Caco-2 (cell line): ENCODE measurements at regions of chr16 and their contacts with region 1.

Region 1: GRCh38 chr16:28943281-28943680 is 7.5 kb upstream of the NFATC2IP start:
- DNase-seq: no peak
- H3K4me3 ChIP-seq: no peak overlapping the region
- H3K4me3 Mint-ChIP-seq: no peak overlapping the region
- H3K27ac Mint-ChIP-seq: no peak overlapping the region
- H3K4me1 ChIP-seq: no peaks in the 10 kb centered on the region
- H3K4me1 Mint-ChIP-seq: peaks cover 6% of the 10 kb centered on the region
- H3K27me3 ChIP-seq: no peaks in the 10 kb centered on the region
- H3K27me3 Mint-ChIP-seq: no peaks in the 10 kb centered on the region
- CTCF ChIP-seq: no peak

Region 2: DNA sequence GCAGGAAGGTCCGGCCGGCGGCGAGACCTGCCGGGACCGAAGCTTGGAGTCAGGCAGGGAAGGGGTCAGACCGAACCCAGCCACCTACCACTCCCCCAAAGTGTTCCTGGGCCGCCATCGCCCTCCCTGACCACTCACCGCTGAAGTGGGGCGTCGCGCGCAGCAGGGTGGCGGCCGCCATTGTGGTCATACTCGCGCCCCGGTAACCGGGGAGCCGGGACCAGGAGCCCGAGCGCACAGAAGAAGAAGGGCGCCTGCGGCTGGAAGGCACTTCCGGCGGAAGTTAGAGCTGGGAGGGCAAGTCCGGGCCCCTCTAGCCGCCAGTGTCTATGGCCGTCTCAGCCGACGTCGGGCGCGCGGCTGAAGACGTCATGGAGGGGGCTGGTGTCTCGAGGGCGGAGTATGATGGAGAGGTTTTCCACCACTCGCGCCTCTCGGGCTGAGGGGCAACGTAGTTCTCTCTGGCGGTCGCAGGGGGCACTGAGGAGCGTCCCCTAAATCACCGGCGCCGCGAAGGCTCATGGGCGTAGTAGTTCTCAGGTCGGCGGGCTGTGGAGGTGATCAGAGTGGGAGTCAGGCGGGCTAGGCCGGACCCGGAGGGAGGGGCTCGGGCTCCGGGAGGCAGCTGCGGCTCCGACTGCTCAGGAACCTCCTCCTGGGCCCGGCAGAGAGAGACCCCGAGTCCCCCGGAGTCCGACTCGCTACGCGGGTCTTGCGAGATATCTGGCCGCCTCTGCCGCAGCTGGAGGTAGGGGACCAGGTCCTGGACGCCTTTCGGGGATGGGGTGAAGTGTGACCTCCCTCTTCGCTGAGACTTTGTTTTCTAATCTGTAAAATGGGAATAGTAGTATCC is 97.0 kb before region 1 on chr16 and contains the start of gene TUFM:
- CTCF ChIA-PET with region 1: interaction called, 3 read pairs
- POLR2A ChIA-PET with region 1: interaction called, 3 read pairs
- intact Hi-C with region 1: loop called (anchors 2 kb)
- DNase-seq: peak; percentile 97
- H3K4me3 ChIP-seq: peak within 1 kb of the TSS; percentile 90
- H3K4me3 Mint-ChIP-seq: peak within 1 kb of the TSS; percentile 92
- H3K27ac Mint-ChIP-seq: peak within 1 kb of the TSS; percentile 96
- H3K4me1 ChIP-seq: 0 out of 2 replicates have a peak, but pooled peaks cover 8% of the 10 kb centered on the region
- H3K4me1 Mint-ChIP-seq: no peaks in the 10 kb centered on the region
- H3K27me3 ChIP-seq: no peaks in the 10 kb centered on the region
- H3K27me3 Mint-ChIP-seq: no peaks in the 10 kb centered on the region
- CTCF ChIP-seq: peak; percentile 56 to 79
- total RNA-seq, gene TUFM: 207 and 234 TPM in 2 replicates

Region 3: GRCh38 chr16:28863929-28864793 is 79.1 kb before region 1 on chr16:
- CTCF ChIA-PET with region 1: interaction called, 8 read pairs
- POLR2A ChIA-PET with region 1: no interaction called
- intact Hi-C with region 1: loop called (anchors 5 kb)
- DNase-seq: no peak
- H3K4me3 ChIP-seq: peak overlapping the region; percentile 48
- H3K4me3 Mint-ChIP-seq: peak overlapping the region; percentile 94
- H3K27ac Mint-ChIP-seq: peak overlapping the region; percentile 96
- H3K4me1 ChIP-seq: peaks cover 12% of the 10 kb centered on the region
- H3K4me1 Mint-ChIP-seq: peaks cover 13% of the 10 kb centered on the region
- H3K27me3 ChIP-seq: no peaks in the 10 kb centered on the region
- H3K27me3 Mint-ChIP-seq: no peaks in the 10 kb centered on the region
- CTCF ChIP-seq: no peak

Region 4: DNA sequence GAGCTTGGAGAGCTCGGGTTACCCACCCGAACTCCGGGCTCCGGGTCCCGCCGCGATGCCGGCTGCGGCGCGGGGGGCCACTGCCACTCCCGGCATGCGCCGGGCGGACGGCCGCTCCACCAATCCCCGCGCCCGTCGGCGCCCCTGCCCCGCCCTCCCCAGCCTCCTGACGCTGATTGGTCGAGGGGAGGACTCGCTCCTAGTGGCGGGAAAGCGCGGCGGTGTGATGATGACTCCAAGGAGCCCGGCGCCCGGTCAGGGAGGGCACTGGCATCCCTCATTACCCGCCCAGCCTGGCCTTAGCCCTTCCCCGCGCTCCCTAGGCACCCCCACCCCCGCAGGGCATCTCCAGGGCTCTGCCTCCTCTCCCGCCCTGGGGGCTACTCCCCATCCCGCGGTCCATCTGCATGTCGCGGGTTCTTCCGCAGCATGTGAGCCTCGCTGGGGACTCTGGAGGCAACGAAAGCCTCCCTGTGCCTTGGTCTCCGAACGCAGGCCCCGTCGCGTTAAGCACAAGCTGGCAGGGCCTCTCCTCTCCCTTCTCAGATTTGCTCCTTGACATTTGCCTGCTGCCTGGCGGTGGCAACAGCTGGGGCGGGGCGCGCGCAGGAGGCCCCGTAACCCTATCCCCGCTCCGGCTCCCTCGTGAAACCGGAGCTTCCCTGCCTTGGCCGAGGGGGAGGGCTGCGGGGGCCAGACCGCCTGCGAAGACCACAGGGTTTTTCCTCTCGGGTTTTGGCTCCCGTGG is 63.3 kb before region 1 on chr16:
- CTCF ChIA-PET with region 1: interaction called, 6 read pairs
- POLR2A ChIA-PET with region 1: no interaction called
- intact Hi-C with region 1: loop called (anchors 2 kb)
- DNase-seq: peak; percentile 86 to 90
- H3K4me3 ChIP-seq: peak overlapping the region; percentile 63
- H3K4me3 Mint-ChIP-seq: peak overlapping the region; percentile 89
- H3K27ac Mint-ChIP-seq: peak overlapping the region; percentile 80
- H3K4me1 ChIP-seq: peaks cover 5% of the 10 kb centered on the region; the same call in 1 of the 2 replicates
- H3K4me1 Mint-ChIP-seq: no peaks in the 10 kb centered on the region
- H3K27me3 ChIP-seq: no peaks in the 10 kb centered on the region
- H3K27me3 Mint-ChIP-seq: no peaks in the 10 kb centered on the region
- CTCF ChIP-seq: no peak

Region 5: GRCh38 chr16:28924732-28925385 is 18.4 kb before region 1 on chr16 and contains the start of gene RABEP2:
- CTCF ChIA-PET with region 1: interaction called, 4 read pairs
- POLR2A ChIA-PET with region 1: interaction called, 4 read pairs
- intact Hi-C with region 1: loop called (anchors 1 kb)
- DNase-seq: peak; percentile 99
- H3K4me3 ChIP-seq: peak within 1 kb of the TSS; percentile 84
- H3K4me3 Mint-ChIP-seq: peak within 1 kb of the TSS; percentile 95
- H3K27ac Mint-ChIP-seq: peak within 1 kb of the TSS; percentile 94
- H3K4me1 ChIP-seq: peaks cover 11% of the 10 kb centered on the region
- H3K4me1 Mint-ChIP-seq: peaks cover 14% of the 10 kb centered on the region
- H3K27me3 ChIP-seq: no peaks in the 10 kb centered on the region
- H3K27me3 Mint-ChIP-seq: no peaks in the 10 kb centered on the region
- CTCF ChIP-seq: no peak
- total RNA-seq, gene RABEP2: 22.9 and 24.2 TPM in 2 replicates

Region 6: DNA sequence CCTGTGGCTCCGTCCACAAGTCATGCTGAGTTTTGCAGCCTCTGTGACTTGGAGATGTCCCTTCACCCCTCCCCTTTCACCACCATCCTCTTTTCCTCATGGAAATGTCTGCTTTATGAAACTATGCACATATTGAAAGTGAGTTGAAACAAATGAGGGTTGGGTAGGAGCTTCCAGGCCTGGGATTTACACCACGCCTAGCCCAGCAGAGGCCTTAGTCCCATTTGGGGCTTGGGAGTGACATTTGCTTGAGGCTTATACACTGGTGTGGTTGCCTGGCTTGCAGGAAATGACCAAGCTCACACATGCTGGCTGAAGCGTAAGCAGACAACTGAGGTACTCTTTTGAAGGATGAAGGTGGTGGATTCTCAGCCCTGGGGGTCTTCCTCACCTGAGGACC is 20.8 kb after region 1 on chr16:
- CTCF ChIA-PET with region 1: interaction called, 4 read pairs
- POLR2A ChIA-PET with region 1: interaction called, 11 read pairs
- intact Hi-C with region 1: no loop called
- DNase-seq: no peak
- H3K4me3 ChIP-seq: no peak overlapping the region
- H3K4me3 Mint-ChIP-seq: no peak overlapping the region
- H3K27ac Mint-ChIP-seq: no peak overlapping the region
- H3K4me1 ChIP-seq: no peaks in the 10 kb centered on the region
- H3K4me1 Mint-ChIP-seq: no peaks in the 10 kb centered on the region
- H3K27me3 ChIP-seq: no peaks in the 10 kb centered on the region
- H3K27me3 Mint-ChIP-seq: no peaks in the 10 kb centered on the region
- CTCF ChIP-seq: no peak

Region 7: DNA sequence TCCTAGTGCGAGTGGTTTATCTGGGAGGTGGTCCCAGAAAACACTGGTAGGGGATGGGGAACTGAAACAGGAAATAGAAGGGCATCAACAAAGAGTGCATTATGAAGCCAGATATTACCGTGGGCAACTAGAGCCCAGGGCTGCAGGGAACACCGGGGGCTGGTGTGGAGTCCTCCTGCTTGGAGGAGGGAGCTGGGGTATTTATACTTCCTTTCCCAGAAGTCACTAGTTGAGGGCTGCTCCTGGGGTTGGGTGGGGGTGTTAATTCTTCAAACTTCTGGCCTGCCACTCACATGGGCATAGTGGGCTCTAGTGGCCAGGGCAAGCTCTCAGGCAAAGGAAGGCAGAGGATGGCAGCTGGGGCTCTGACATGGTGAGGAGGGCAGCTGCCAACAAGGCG is 56.3 kb after region 1 on chr16:
- CTCF ChIA-PET with region 1: no interaction called
- POLR2A ChIA-PET with region 1: no interaction called
- intact Hi-C with region 1: no loop called
- DNase-seq: no peak
- H3K4me3 ChIP-seq: no peak overlapping the region
- H3K4me3 Mint-ChIP-seq: no peak overlapping the region
- H3K27ac Mint-ChIP-seq: no peak overlapping the region
- H3K4me1 ChIP-seq: no peaks in the 10 kb centered on the region
- H3K4me1 Mint-ChIP-seq: no peaks in the 10 kb centered on the region
- H3K27me3 ChIP-seq: no peaks in the 10 kb centered on the region
- H3K27me3 Mint-ChIP-seq: peaks cover 6% of the 10 kb centered on the region
- CTCF ChIP-seq: no peak